ENCODE measurements at regions of chr1 and their contacts with region 1.

Region 1: GRCh38 chr1:165697881-165698760 is at the start of gene ALDH9A1:
- DNase-seq: peak; percentile 68 to 87
- ATAC-seq: peak; percentile 90 to 92
- H3K4me3 ChIP-seq: peak within 1 kb of the TSS; percentile 91 to 96 (median 94)
- H3K27ac ChIP-seq: peak within 1 kb of the TSS; percentile 97 to 98 (median 98)
- H3K4me1 ChIP-seq: peaks cover 18 to 27% of the 10 kb centered on the region in 2 donors
- H3K27me3 ChIP-seq: no peaks in the 10 kb centered on the region
- CTCF ChIP-seq: peak in 2 of 5 experiments; percentile 49 to 52
- POLR2A ChIP-seq: peak; percentile 75 to 90
- total RNA-seq, gene ALDH9A1: 46.4 to 91.5 (median 63.3) TPM

Region 2: GRCh38 chr1:165630629-165631341 is 67.3 kb before region 1 on chr1 and contains the start of gene MGST3:
- in situ Hi-C with region 1: loop called in 1 of 4 experiments (anchors 10 kb)
- intact Hi-C with region 1: loop called (anchors 1 kb)
- DNase-seq: peak; percentile 90 to 95
- ATAC-seq: peak; percentile 81
- H3K4me3 ChIP-seq: peak within 1 kb of the TSS; percentile 64 to 95 (median 76)
- H3K27ac ChIP-seq: peak within 1 kb of the TSS; percentile 91 to 100 (median 94)
- H3K4me1 ChIP-seq: peaks cover 39 to 42% of the 10 kb centered on the region in 2 donors
- H3K27me3 ChIP-seq: no peaks in the 10 kb centered on the region
- CTCF ChIP-seq: no peak
- POLR2A ChIP-seq: peak; percentile 96
- total RNA-seq, gene MGST3: 101 to 275 (median 202) TPM

Measured in gastrocnemius medialis (tissue), 4 donors.